Activated T-helper 2 cell treated with anti-CD3 and anti-CD28 coated beads, Interferon-gamma antibody, Interleukin-2, Interleukin-4, amounts not matched to agents 10 μg/mL and 5 μg/mL and 100 μg/mL, durations not matched to agents 14 hours and 24 hours and 36 hours (primary cell): ENCODE measurements at regions of chr14 and their contacts with region 1.

Region 1: DNA sequence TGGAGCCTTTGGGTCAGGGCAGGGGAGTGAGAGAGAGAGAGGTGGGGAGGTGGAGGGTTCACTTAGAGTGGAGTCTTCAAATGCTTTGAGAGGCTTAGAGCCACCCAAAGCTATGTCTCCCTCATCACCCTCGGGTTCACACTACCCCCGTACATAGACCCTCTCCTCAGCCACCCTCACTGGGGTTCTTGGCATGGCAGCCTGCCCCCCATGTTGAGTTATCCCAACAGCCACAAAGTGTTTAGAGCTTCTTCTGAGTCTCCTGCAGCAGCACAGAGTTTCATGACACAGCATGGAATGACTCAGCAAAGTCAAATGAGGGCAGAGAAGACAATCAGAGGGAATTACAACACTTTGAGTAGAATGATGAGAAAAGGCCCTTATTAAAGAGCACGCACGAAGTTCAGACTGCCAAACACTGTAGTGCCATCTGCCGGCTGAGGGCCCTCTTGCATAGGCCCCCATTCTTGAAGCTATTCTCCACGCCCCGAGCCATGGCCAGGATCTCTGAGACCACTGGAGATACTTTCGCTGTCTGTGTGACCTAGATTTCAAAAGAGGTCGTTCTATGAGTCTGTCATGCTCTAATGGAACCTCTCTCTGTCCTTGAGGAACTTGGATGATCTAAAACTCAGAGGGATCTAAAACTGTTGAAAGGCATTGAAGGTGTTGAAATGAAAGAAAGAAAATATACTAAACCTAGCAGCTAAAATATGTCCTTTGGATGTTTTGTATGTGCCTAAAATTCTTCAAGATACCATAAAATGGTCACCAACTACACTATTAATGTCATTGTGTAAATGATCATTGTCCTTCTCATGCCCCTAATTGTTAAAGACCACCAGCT is 221.9 kb downstream of the PELI2 start:
- DNase-seq: peak; percentile 36
- H3K4me3 Mint-ChIP-seq: no peak overlapping the region
- H3K27ac Mint-ChIP-seq: no peak overlapping the region
- H3K4me1 Mint-ChIP-seq: peaks cover 8% of the 10 kb centered on the region
- H3K27me3 Mint-ChIP-seq: no peaks in the 10 kb centered on the region

Region 2: GRCh38 chr14:55707365-55707804 is 632.7 kb before region 1 on chr14:
- intact Hi-C with region 1: loop called (anchors 5 kb)
- DNase-seq: no peak
- H3K4me3 Mint-ChIP-seq: no peak overlapping the region
- H3K27ac Mint-ChIP-seq: no peak overlapping the region
- H3K4me1 Mint-ChIP-seq: peaks cover 3% of the 10 kb centered on the region
- H3K27me3 Mint-ChIP-seq: no peaks in the 10 kb centered on the region

Region 3: GRCh38 chr14:55864890-55865655 is 475.0 kb before region 1 on chr14:
- intact Hi-C with region 1: loop called (anchors 2 kb)
- DNase-seq: no peak
- H3K4me3 Mint-ChIP-seq: no peak overlapping the region
- H3K27ac Mint-ChIP-seq: no peak overlapping the region
- H3K4me1 Mint-ChIP-seq: peaks cover 10% of the 10 kb centered on the region
- H3K27me3 Mint-ChIP-seq: peaks cover 13% of the 10 kb centered on the region